ENCODE measurements at regions of chr6 and their contacts with region 1.

Region 1: GRCh38 chr6:167141667-167142432 is 15.9 kb downstream of the GPR31 start:
- DNase-seq: peak; percentile 66 to 72
- H3K4me3 ChIP-seq: no peak overlapping the region
- H3K27ac ChIP-seq: no peak overlapping the region
- H3K4me1 ChIP-seq: no peaks in the 10 kb centered on the region
- H3K27me3 ChIP-seq: no peaks in the 10 kb centered on the region
- CTCF ChIP-seq: peak; percentile 32 to 96 (median 88)
- POLR2A ChIP-seq: no peak

Region 2: DNA sequence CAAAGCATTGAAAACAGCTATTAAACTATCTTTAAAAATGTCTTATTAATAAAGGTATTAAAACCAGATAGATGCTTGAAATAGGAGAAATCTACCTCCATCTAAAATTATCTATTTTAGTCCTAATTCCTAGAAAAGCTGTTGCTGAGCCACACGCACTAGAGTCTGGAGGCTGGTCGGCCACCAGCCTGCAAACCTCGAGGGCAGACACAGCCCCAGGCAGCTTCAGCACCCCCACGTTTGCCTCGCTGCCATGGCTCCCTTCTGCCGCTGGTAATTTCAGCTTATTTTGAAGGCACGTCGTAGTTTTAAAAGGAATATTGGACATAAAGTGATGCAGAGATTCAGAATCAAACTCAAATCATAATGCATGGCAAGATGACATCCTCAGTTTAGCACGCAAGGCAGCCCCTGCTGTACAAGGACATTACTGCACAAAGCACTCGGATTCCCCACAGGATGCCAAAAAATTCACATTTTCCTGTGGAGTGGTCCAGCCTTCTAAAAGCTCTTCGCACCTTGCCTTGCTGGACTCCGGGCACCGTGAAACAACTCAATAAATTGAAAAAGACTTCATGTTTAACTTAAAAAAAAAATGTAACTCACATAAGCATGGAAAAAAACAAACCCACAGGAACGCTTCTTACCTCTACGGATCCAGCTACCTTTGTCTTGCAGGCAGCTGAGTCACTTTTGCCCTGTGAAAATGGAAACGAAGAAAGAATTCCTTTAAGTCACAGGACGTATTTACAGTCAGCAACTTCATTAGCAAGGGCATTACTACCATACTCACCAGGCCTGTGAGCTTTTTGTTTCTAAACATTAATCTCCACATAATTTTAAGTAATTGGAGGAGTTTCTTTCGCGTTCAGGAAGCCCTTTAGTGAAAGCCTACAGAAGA is 371.4 kb before region 1 on chr6:
- intact Hi-C with region 1: loop called (anchors 5 kb)
- DNase-seq: no peak
- H3K4me3 ChIP-seq: no peak overlapping the region
- H3K27ac ChIP-seq: no peak overlapping the region
- H3K4me1 ChIP-seq: no peaks in the 10 kb centered on the region
- H3K27me3 ChIP-seq: no peaks in the 10 kb centered on the region
- CTCF ChIP-seq: no peak
- POLR2A ChIP-seq: no peak

Region 3: GRCh38 chr6:166786704-166787293 is 355.1 kb before region 1 on chr6:
- intact Hi-C with region 1: loop called (anchors 5 kb)
- DNase-seq: peak; percentile 5 to 9
- H3K4me3 ChIP-seq: no peak overlapping the region
- H3K27ac ChIP-seq: no peak overlapping the region
- H3K4me1 ChIP-seq: no peaks in the 10 kb centered on the region
- H3K27me3 ChIP-seq: no peaks in the 10 kb centered on the region
- CTCF ChIP-seq: peak; percentile 52 to 80 (median 66)
- POLR2A ChIP-seq: no peak

Region 4: DNA sequence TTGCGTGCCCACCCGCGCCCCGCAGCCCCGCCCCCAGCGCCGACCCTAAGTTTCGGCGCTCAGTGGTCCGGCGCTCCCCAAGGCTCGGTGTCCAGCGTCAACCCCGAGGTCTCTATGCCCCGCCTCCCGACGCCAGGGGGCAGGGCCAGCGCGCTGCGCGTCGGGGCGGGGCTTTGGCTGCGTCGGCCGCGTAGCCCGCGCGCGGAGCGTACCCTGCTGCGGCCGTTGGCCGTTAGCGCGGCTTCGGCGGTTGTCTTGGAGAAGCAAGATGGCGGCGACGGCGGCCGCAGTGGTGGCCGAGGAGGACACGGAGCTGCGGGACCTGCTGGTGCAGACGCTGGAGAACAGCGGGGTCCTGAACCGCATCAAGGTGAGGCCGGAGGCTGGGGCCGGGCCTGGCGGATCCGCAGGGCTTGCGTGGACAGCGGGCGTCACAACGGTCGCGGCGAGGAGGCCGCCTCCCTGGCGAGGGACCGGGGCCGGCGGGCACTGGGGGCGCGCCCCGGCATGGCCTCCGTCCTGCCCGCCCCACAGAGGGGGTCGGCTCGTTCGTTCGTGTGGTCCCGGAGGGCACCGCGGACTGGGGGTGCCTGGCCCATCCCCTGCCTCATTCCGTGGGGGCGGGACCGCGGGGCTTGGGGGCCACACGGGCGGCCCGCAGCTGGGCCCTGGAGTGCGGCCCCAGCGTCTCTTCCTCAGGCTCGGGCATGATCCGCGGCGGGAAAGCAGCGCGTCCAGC is 142.5 kb before region 1 on chr6 and contains the start of gene CEP43:
- intact Hi-C with region 1: loop called (anchors 5 kb)
- DNase-seq: peak; percentile 95 to 96
- H3K4me3 ChIP-seq: peak within 1 kb of the TSS; percentile 67 to 89 (median 88)
- H3K27ac ChIP-seq: peak within 1 kb of the TSS in 2 of 3 donors; percentile 60 to 67
- H3K4me1 ChIP-seq: peaks cover 12 to 13% of the 10 kb centered on the region in 2 donors
- H3K27me3 ChIP-seq: no peaks in the 10 kb centered on the region
- CTCF ChIP-seq: no peak
- POLR2A ChIP-seq: peak in 1 of 2 donors; percentile 91
- total RNA-seq, gene CEP43: 30.0 to 39.9 (median 33.8) TPM

Region 5: GRCh38 chr6:167437888-167438484 is 296.1 kb after region 1 on chr6:
- intact Hi-C with region 1: no loop called
- DNase-seq: no peak
- H3K4me3 ChIP-seq: no peak overlapping the region
- H3K27ac ChIP-seq: no peak overlapping the region
- H3K4me1 ChIP-seq: no peaks in the 10 kb centered on the region
- H3K27me3 ChIP-seq: no peaks in the 10 kb centered on the region
- CTCF ChIP-seq: no peak
- POLR2A ChIP-seq: no peak

Measured in thyroid gland (tissue), 4 donors.